Motor neuron (in vitro differentiated cells): ENCODE measurements at regions of chr17 and their contacts with region 1.

Region 1: GRCh38 chr17:11122908-11123307 is 118.1 kb upstream of the SHISA6 start:
- ATAC-seq: no peak
- H3K4me3 ChIP-seq: no peak overlapping the region
- H3K27ac ChIP-seq: no peak overlapping the region
- H3K4me1 ChIP-seq: no peaks in the 10 kb centered on the region

Region 2: GRCh38 chr17:11023639-11024479 is 99.0 kb before region 1 on chr17:
- in situ Hi-C with region 1: loop called in 1 of 9 experiments (anchors 25 kb)
- ATAC-seq: no peak
- H3K4me3 ChIP-seq: no peak overlapping the region
- H3K27ac ChIP-seq: no peak overlapping the region
- H3K4me1 ChIP-seq: no peaks in the 10 kb centered on the region

Region 3: GRCh38 chr17:11205659-11206058 is 82.8 kb after region 1 on chr17:
- in situ Hi-C with region 1: no loop called
- ATAC-seq: peak in 1 of 8 experiments; percentile 63
- H3K4me3 ChIP-seq: no peak overlapping the region
- H3K27ac ChIP-seq: no peak overlapping the region
- H3K4me1 ChIP-seq: no peaks in the 10 kb centered on the region

Region 4: GRCh38 chr17:11216976-11217375 is 94.1 kb after region 1 on chr17:
- in situ Hi-C with region 1: no loop called
- ATAC-seq: peak in 4 of 8 experiments; percentile 47 to 82 (median 60)
- H3K4me3 ChIP-seq: no peak overlapping the region
- H3K27ac ChIP-seq: no peak overlapping the region
- H3K4me1 ChIP-seq: peaks cover 6 to 12% of the 10 kb centered on the region in 2 donors